Sciatic nerve (tissue), 2 donors: ENCODE measurements at regions of chr7 and their contacts with region 1.

Region 1: GRCh38 chr7:127375631-127376030 is 16.9 kb downstream of the ZNF800 start:
- DNase-seq: no peak
- ATAC-seq: no peak

Region 2: GRCh38 chr7:127239814-127240213 is 135.8 kb before region 1 on chr7:
- intact Hi-C with region 1: loop called (anchors 5 kb)
- DNase-seq: no peak
- ATAC-seq: no peak

Region 3: DNA sequence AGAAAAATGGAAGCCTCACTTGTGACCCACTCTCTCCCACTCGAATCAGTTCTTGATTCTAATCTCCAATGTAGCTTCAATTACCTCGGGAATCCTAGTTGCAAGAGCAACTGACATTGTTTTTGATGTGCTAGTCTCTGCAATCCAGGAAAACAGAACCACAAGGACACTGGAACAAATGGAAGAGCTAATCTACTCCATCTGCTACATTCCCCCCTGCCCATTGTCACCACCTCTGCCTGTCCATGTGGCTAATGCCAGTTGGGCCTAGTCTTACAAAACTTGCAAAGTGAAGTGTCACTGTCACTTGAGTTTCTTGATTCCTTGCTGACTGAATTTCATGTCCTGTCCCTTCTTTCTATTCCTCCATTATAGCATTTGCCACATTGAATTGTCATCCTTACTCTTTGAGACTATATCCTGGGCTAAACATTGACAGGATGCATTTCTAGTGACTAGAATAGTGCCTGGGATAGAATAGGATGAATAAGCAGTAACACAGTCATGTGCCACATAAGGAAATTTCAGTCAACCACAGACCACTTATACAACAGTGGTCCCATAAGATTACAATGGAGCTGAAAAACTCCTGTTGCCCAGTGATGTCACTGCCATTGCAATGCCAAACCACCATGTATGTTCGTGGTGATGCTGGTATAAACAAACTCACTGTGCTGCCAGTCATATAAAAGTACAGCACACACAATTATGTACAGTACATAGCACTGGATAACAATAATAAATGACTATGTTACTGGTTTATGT is 196.3 kb after region 1 on chr7:
- intact Hi-C with region 1: no loop called
- DNase-seq: no peak
- ATAC-seq: no peak